AG04450 (cell line): ENCODE measurements at regions of chr22 and their contacts with region 1.

Region 1: GRCh38 chr22:25447686-25448434 is 116.6 kb upstream of the GRK3 start:
- DNase-seq: peak; percentile 33
- H3K4me3 ChIP-seq: peak overlapping the region; percentile 82
- H3K27ac ChIP-seq: peak overlapping the region; percentile 68
- H3K27me3 ChIP-seq: no peaks in the 10 kb centered on the region
- CTCF ChIP-seq: peak; percentile 95

Region 2: DNA sequence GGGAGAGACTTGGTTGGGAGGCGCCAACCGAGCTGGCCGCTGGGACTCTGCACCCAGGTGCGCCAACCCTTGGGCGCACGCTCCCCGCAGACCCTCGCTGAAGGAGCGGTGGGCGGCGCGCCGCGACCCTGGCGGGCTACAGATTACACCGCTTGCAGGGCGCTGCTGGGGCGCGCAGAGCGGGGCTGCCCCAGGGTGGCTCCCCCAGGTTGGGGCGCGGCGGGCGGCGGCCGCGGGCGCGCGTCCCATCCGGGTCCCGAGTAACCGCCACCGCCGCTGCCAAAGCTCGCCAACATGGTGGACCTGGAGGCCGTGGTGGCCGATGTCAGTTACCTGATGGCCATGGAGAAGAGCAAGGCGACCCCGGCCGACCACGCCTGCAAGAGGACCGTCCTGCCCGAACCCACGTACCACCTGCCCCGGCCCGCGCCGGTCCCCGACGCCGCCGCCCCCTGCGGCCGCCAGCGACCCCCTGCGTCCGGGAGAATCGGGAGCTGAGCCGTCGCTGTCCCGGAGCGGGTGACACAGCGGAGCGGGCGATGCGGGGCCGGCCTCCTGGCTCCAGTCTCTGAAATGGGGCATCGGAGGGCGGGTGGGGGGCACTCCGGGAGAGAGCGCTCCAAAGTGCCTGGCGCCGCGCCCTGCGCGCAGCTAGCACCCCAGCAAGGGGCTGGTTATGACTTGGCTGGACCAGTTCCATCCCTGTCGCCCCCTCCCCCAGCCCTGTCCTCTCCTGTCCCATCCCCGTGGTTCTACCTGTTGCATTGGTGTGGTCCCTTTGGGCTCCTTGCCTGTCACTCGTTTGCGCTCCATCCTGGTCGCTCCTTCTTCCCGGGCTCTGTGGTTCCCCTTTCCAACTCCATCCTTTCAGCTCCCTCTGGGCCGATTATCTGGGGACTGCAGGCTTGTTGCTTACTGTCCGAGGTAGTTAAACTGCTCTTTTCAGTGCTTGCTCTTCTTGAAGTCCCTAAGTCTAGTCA is 26.6 kb before region 1 on chr22:
- CTCF ChIA-PET with region 1: interaction called, 14 read pairs
- POLR2A ChIA-PET with region 1: no interaction called
- DNase-seq: no peak
- H3K4me3 ChIP-seq: no peak overlapping the region
- H3K27ac ChIP-seq: no peak overlapping the region
- H3K27me3 ChIP-seq: peaks cover 45% of the 10 kb centered on the region
- CTCF ChIP-seq: no peak

Region 3: DNA sequence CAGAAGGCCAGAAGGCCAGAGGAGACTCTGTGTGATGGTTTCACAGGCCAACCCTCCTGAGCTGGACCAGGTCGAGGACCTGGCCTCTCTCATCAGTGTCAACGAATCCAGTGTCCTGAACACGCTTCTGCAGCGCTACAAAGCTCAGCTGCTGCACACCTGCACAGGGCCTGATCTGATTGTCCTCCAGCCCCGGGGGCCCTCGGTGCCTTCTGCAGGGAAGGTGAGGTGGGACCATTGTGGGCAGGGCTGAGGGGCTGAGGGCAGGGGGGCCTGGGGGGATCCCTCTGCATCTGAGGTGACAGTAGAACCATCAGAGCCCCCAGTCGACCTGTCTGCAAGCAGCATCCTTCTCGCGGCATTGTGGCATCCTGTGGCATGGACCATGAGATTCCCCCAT is 324.4 kb after region 1 on chr22:
- CTCF ChIA-PET with region 1: interaction called, 11 read pairs
- POLR2A ChIA-PET with region 1: no interaction called
- DNase-seq: no peak
- H3K4me3 ChIP-seq: no peak overlapping the region
- H3K27ac ChIP-seq: no peak overlapping the region
- H3K27me3 ChIP-seq: no peaks in the 10 kb centered on the region
- CTCF ChIP-seq: no peak